OCI-LY7 (cell line): ENCODE measurements at regions of chr11 and their contacts with region 1.

Region 1: DNA sequence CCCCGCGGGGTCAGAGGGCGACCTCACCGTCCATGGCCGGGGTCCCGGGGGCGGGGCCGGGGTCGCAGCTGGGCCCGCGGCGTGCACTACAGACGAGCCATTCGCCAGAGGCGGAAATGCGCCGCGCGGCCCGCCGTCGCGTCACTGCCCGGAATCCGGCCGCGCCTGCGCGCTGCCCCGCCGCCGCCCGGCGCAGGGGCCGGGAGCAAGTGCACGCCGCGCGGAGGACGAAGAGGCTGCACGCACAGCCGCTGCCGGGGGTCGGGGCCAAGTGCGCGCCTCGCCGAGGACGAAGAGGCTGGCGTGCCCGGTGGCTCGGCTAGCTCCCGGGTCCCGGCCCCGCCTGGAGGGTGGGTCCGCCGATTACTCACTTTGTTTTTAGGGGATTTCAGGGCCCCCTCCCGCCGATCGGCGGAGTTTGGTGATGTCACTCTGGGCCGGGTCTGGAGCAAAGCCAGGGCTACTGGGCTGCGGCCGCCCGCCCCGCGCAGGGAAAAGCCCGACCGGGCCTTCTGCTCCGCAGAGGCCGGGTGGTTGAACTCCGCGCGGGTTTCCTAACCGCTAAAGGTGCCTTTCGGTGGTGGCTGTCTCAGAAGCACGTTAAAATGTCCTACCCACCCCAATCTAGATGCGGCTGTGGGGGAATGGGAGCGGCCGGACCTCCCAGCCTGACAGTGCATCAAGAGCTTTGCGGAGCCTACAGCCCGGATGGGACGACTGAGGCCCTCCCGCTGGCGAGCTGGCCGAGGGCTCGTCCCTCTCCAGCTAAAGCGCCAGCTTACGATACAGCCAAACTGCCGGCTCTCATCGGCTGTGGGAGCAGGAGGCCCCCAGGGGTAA is at the start of gene RELA:
- DNase-seq: peak; percentile 96
- H3K4me3 ChIP-seq: peak within 1 kb of the TSS; percentile 100
- H3K27ac ChIP-seq: peak within 1 kb of the TSS; percentile 90
- H3K4me1 ChIP-seq: peaks cover 15% of the 10 kb centered on the region
- CTCF ChIP-seq: no peak
- total RNA-seq, gene RELA: 40.4 and 48.0 TPM in 2 replicates

Region 2: DNA sequence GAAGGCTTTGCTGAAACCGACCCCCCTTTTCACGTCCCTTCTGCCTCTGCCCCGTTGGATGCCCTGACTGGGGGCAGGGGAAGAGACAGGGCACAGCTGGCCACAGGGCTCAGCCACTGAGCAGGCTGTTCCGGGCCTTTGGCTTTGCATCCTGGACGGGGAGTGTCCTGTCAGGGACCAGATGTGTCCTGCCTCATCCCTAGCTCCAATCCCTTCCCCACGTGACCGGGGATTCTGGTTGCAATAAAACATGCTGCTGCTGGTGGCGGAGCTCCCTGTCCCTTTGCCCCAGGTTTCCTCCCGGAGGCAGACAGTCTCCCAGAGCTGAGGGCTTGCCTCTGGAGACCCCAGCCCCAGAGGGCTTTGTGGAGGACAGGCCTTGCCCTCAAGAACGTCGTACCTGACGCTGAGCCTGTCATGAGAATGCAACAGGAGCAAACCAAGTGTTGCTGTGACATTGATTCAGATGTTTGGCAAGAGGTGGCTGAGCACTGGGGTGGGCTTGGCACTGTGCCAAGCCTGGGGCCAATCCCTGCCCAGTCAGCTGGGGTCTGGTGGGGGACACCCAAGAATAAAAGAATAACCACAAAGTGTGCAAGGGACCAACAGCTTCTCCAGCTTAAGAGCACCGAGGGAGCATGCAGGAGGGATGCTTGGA is 341.1 kb before region 1 on chr11:
- CTCF ChIA-PET with region 1: no interaction called
- POLR2A ChIA-PET with region 1: no interaction called
- intact Hi-C with region 1: no loop called
- DNase-seq: no peak
- H3K4me3 ChIP-seq: no peak overlapping the region
- H3K27ac ChIP-seq: no peak overlapping the region
- H3K4me1 ChIP-seq: no peaks in the 10 kb centered on the region
- CTCF ChIP-seq: no peak

Region 3: GRCh38 chr11:65615229-65615941 is 47.6 kb before region 1 on chr11 and contains the start of gene PCNX3:
- CTCF ChIA-PET with region 1: no interaction called
- POLR2A ChIA-PET with region 1: interaction called, 4 read pairs
- intact Hi-C with region 1: loop called (anchors 1 kb)
- DNase-seq: peak; percentile 100
- H3K4me3 ChIP-seq: peak within 1 kb of the TSS; percentile 97
- H3K27ac ChIP-seq: peak within 1 kb of the TSS; percentile 75
- H3K4me1 ChIP-seq: peaks cover 48% of the 10 kb centered on the region
- CTCF ChIP-seq: no peak
- total RNA-seq, gene PCNX3: 29.9 and 36.2 TPM in 2 replicates

Region 4: GRCh38 chr11:65625628-65626342 is 37.2 kb before region 1 on chr11:
- CTCF ChIA-PET with region 1: no interaction called
- POLR2A ChIA-PET with region 1: no interaction called
- intact Hi-C with region 1: loop called (anchors 1 kb)
- DNase-seq: peak; percentile 55
- H3K4me3 ChIP-seq: no peak overlapping the region
- H3K27ac ChIP-seq: no peak overlapping the region
- H3K4me1 ChIP-seq: no peaks in the 10 kb centered on the region
- CTCF ChIP-seq: peak; percentile 81

Region 5: DNA sequence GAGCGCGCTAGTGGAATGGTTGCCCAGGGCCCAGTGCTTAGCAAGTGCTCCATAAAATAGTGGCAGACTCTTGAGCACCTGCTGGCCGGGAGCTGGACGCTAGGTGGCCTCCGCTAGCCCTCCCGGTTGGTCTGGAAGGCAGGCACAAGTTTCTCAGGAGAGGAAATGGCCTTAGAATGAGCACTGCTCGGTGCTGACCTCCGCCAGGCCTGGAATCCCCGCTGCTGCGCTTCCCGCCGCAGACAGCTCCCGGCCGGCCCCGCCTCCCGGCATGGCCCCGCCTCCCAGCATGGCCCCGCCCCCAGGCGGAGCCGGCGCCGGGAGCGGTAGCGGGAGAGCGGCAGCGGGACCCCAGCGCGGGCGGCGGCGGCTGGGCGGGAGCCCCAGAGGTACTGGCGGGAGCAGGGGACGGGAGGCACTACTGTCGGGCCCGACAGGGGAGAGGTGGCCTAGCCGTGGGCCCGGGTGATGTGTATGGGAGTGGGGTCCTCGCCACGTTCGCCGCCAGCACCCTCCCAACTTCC is 25.2 kb before region 1 on chr11 and contains the start of gene SIPA1:
- CTCF ChIA-PET with region 1: no interaction called
- POLR2A ChIA-PET with region 1: interaction called, 7 read pairs
- intact Hi-C with region 1: loop called (anchors 1 kb)
- DNase-seq: peak; percentile 75
- H3K4me3 ChIP-seq: peak within 1 kb of the TSS; percentile 90
- H3K27ac ChIP-seq: peak within 1 kb of the TSS; percentile 95
- H3K4me1 ChIP-seq: peaks cover 51% of the 10 kb centered on the region
- CTCF ChIP-seq: no peak
- total RNA-seq, gene SIPA1: 57.6 and 95.4 TPM in 2 replicates